A549 (cell line): ENCODE measurements at regions of chr3 and their contacts with region 1.

Region 1: GRCh38 chr3:149352556-149352955 is 19.1 kb upstream of the TM4SF18 start:
- DNase-seq: peak; percentile 82 to 86
- ATAC-seq: peak; percentile 83 to 95; a peak in 5 of 6 replicates
- H3K4me3 ChIP-seq: no peak overlapping the region
- H3K27ac ChIP-seq: peak overlapping the region; percentile 35 to 72; a peak in 5 of 6 replicates
- H3K4me1 ChIP-seq: peaks cover 6% of the 10 kb centered on the region; the same call in 1 of the 3 replicates
- CTCF ChIP-seq: peak; percentile 59
- EP300 ChIP-seq: no peak
- POLR2A ChIP-seq: no peak
- RAD21 ChIP-seq: peak; percentile 73 to 82

Region 2: GRCh38 chr3:149339931-149340309 is 12.6 kb before region 1 on chr3:
- CTCF ChIA-PET with region 1: interaction called, 10 read pairs
- POLR2A ChIA-PET with region 1: no interaction called
- DNase-seq: peak; percentile 82 to 98
- ATAC-seq: peak; percentile 99 to 100
- H3K4me3 ChIP-seq: 0 out of 3 replicates have a peak overlapping the region, but pooled peaks have one; percentile 2
- H3K27ac ChIP-seq: peak overlapping the region; percentile 88 to 93
- H3K4me1 ChIP-seq: peaks cover 52% of the 10 kb centered on the region
- CTCF ChIP-seq: no peak
- EP300 ChIP-seq: peak; percentile 92 to 95
- POLR2A ChIP-seq: no peak
- RAD21 ChIP-seq: peak; percentile 20 to 44; a peak in 3 of 5 replicates

Region 3: GRCh38 chr3:149363053-149363452 is 10.5 kb after region 1 on chr3:
- CTCF ChIA-PET with region 1: interaction called, 29 read pairs
- POLR2A ChIA-PET with region 1: no interaction called
- DNase-seq: no peak
- ATAC-seq: no peak
- H3K4me3 ChIP-seq: no peak overlapping the region
- H3K27ac ChIP-seq: peak overlapping the region in 1 of 2 experiments; percentile 29; a peak in 1 of 6 replicates
- H3K4me1 ChIP-seq: peaks cover 20% of the 10 kb centered on the region
- CTCF ChIP-seq: no peak
- EP300 ChIP-seq: no peak
- POLR2A ChIP-seq: no peak
- RAD21 ChIP-seq: no peak